Colonic mucosa (tissue), 4 donors: ENCODE measurements at regions of chr3 and their contacts with region 1.

Region 1: DNA sequence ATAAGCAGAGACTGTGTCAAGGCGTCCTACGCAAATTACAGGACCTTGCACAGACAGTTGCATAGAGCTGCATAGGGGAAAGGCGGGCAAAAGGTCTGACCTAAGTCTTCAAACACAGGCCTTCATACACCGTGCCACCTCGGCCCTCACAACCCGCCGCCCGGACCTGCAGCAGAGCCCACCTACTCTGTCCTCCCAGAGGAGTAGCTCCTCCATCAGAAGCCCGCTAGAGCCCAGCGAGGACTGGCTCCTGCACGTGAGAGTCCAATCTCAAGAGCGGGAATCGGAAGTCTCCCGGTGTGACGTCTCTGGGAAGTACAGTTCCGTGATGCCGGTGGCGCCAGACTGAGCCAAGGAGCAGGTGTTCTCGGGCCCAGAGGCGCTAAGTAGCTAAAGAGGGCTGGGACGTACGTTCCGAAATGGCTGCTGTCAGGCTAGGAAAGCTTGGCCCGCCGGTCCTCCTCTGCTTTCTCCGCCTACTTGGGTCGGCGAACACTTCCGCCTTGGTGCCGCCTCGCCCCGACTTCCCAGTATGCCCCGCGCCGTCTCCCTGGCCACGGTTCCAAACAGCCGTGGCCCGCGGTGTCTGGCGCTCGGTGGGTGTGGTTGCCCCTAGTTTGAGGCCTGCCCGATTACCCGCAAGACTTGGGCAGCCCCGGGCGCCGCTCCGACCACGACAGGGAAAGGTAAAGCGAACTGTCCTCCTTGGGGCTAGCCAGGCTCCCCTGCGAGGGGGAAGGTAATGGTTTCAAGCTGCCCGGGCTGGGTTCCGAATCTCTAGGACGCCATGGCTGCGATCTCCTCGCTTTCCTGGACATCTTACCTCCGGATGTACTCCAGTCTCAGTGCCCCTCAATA is at the starts of genes ASTE1 and NEK11:
- DNase-seq: peak; percentile 95
- H3K4me3 ChIP-seq: peak within 1 kb of the TSS; percentile 74
- H3K27ac ChIP-seq: peak within 1 kb of the TSS; percentile 90
- H3K4me1 ChIP-seq: no peaks in the 10 kb centered on the region
- H3K27me3 ChIP-seq: no peaks in the 10 kb centered on the region
- CTCF ChIP-seq: no peak
- total RNA-seq, gene ASTE1: 9.3 to 13.0 TPM
- total RNA-seq, gene NEK11: 5.5 to 5.8 TPM

Region 2: GRCh38 chr3:131361464-131362421 is 335.2 kb after region 1 on chr3:
- intact Hi-C with region 1: loop called (anchors 10 kb)
- DNase-seq: peak; percentile 96
- H3K4me3 ChIP-seq: peak overlapping the region; percentile 50
- H3K27ac ChIP-seq: peak overlapping the region; percentile 70
- H3K4me1 ChIP-seq: peaks cover 8% of the 10 kb centered on the region
- H3K27me3 ChIP-seq: no peaks in the 10 kb centered on the region
- CTCF ChIP-seq: no peak

Region 3: GRCh38 chr3:131716007-131716406 is 689.5 kb after region 1 on chr3:
- intact Hi-C with region 1: no loop called
- DNase-seq: no peak
- H3K4me3 ChIP-seq: no peak overlapping the region
- H3K27ac ChIP-seq: no peak overlapping the region
- H3K4me1 ChIP-seq: no peaks in the 10 kb centered on the region
- H3K27me3 ChIP-seq: no peaks in the 10 kb centered on the region
- CTCF ChIP-seq: no peak